Cardiac septum (tissue), 1 donor: ENCODE measurements at regions of chr2 and their contacts with region 1.

Region 1: DNA sequence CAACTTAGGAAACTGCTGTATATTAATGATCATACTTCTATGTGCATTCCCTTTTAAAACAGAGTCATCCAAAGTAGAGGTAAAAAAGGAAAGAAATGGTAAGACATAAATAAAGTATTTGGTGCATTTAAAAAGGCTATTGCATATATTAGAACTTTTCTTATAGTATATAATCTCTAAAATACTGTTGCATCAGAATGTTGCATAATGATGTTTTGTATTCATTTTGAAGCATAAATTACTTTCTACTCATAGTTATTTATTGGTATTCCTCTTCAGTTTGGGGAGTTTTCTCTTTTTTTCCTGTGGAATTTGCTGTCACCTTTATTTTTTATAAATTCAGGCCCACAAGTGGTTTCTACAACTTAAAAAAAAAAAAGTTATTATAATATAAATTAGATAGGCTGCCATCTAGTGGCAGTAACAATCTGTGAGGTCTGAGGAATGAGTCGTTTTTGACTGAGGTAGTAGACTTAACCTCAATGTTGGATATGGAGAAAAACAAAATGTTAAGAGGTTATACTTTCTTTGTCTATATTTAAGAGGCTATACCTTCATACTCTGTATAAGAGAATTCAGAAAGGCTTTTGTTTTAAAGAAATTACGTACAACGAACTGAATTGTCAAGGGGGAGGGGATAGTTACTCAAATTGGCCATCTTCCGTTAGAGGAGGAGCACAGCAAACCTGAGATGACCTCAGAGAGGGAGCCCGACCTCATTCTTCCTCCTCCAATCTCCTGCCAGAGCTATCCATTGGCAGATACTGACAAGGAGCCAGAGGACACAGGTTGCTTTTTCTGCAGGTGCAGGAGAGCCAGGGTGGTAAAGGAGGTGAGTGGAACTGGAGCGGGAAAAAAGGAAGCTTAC is 23.8 kb downstream of the ANKAR start:
- DNase-seq: no peak

Region 2: GRCh38 chr2:189515264-189515663 is 183.0 kb before region 1 on chr2:
- intact Hi-C with region 1: no loop called
- DNase-seq: no peak

Region 3: GRCh38 chr2:189601043-189601442 is 97.2 kb before region 1 on chr2:
- intact Hi-C with region 1: no loop called
- DNase-seq: no peak

Region 4: DNA sequence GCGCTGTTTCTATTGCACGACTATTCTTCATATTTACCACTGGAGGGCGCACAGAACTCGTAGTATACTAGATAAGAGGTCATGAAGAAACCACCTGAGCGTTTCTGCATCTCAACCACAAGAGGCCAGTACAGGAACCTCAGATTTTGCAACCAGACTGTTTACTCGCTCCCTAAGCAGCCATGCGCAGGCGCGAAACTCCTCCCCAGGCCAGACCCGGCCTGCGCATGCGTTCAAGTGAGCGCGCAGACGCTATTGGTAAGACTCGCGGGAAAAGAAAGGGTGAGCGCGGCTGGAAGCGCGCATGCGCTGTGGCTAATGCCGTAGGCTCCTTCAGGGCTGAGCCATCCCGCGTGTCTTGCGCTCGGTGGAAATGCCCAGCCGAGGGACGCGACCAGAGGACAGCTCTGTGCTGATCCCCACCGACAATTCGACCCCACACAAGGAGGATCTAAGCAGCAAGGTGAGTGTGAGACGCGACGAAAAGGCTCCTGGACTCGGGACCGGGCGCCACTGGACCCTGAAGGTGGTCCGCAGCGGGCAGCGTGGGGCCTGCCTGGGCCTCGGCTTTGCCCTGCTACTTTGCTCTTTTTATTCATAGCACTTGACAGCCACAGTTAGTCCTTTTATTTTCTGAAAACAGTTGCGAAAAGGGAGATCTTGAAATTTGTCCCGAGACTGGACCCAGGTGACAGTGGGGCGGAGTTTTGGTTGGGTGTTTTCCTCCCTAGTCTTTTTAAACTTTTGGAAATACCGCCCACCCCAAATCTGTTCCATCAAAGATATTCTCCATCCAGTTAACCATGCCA is 36.9 kb before region 1 on chr2 and contains the start of gene ASNSD1:
- intact Hi-C with region 1: loop called (anchors 1 kb)
- DNase-seq: peak; percentile 99
- total RNA-seq, gene ASNSD1: 27.7 TPM

Region 5: DNA sequence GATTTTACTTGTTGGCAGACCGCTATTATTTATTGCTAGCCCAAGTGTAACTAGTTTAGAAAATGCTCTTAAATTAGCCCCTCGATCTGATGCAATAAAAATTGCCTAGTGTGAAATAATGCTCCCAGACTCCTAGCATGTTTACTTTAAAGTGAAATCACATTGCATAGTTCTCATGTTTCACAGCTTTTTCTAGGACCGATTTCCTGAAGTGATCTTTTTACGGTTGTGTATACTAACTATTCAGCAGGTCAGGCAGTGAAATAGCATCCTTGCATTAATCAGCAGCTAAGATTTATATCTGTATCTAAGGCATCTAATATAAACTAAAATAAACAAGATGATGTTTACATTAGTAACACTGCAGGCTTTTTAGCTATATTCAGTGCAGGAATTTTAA is 138.4 kb after region 1 on chr2:
- intact Hi-C with region 1: no loop called
- DNase-seq: no peak